Head of caudate nucleus (tissue), 42 donors: ENCODE measurements at regions of chr17 and their contacts with region 1.

Region 1: DNA sequence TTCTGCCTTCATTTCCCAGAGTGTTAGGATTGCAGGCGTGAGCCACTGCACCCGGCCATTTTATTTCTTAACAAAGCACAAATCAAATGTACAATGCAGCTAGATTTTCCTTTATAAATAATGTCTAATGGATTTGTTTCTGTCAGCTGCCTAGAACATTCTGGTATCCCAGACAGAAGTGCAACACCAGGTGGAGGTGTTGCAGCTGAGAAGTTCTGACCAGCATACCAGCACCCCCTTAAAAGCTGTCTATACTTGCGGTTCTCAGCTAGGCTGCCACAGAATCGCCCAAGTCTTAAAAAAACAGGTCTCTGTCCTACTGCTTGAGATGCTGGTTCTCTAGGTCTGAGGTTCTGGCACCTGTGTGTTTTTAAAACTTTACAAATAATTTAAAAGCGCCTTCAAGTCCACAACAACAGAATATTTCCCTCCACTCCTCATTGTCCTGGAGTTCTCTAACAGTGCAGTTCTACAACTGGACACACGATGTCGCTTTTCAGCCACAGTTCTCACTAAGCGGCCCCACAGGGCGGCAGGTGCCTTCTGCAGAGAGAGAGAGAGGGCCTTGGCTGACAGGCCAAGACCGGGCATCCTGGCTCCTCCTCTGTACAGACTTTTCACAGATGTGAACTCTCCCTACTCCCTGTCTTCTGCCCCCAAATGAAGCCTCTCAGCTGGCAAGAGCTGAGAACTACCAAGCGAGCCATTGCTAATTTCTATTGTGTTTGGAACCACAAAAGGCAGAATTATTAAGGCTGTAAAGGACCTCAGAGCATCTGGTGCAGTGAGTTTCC is 32.6 kb upstream of the MEOX1 start:
- DNase-seq: peak; percentile 50 to 92 (median 78)

Region 2: DNA sequence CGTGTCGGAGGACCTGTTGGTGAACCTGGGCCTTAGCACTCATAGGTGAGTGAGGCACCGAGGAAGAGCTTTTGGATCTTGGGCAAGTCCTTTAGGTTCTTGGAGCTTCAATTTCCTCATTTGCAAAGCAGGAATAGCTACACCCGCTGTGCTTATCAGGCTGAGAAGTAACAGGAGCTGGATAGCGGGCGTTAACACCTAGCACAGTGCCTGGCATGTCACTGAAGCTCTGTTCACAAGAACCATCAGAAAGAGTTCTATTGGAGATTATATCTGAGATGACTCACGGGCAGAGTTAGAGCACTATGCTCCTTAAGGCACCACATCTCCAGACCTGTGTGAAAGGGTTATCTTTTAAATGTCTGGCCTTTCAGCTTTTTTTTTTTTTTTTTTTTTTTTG is 45.4 kb before region 1 on chr17:
- intact Hi-C with region 1: no loop called
- DNase-seq: no peak

Region 3: GRCh38 chr17:43745541-43745940 is 51.3 kb after region 1 on chr17:
- intact Hi-C with region 1: no loop called
- DNase-seq: peak in 1 of 42 donors; percentile 21

Region 4: DNA sequence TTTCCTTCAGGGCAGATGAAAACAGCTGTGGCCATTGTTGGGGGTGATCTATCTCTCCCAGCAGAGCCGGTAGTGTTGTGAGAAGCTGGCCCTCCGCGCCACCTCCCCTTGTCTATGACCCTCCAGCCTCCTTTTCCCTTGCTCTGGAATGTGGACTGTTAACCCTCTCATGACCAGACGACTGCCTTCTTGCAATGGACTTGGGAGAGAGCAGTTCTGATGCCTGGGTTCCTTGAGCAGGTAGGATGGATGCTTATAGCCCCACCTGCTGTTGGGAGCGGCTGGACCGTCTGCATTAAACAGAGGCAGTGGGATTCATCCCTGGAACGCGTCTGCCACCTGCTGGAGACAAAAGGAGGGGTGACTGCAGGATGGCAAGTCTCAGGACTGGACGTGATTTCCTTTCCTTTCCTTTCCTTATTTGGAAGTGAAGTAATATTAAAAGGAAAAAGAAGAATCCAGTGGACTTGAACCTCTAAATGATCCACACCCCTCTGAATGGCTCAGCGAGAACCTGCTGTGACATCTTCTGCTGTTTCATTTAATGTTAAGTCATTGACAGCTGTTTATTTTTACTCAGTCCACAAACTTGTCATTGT is 66.1 kb after region 1 on chr17:
- intact Hi-C with region 1: loop called (anchors 1 kb)
- DNase-seq: peak; percentile 83 to 98 (median 95)

Region 5: DNA sequence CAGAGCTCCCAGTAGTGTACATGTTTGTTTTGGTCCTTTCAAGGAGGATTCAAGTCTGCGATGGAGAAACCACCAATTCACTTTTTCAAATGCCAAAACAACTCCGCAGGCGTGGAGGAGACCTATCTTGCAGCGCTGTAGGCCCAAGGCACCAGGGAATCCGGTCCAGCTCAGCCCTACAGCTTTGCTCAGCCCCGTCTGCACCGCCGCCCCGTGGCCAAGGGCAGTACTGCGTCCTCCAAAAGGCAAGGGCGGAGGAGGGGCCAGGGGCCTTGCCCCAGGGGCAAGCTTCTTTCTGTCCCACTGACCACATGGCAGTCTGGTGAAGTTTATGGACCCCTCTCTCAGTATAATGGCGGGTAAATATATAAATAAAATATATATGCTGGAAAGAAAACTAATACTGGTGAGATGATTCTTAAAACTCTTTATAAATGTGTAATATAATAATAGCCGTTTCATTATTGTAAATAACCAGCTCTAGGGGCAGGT is 152.0 kb after region 1 on chr17:
- intact Hi-C with region 1: loop called (anchors 10 kb)
- DNase-seq: peak; percentile 73 to 95 (median 89)

Region 6: GRCh38 chr17:43880420-43880991 is 186.2 kb after region 1 on chr17:
- intact Hi-C with region 1: no loop called
- DNase-seq: peak in 16 of 42 donors; percentile 18 to 56 (median 32)